ENCODE measurements at regions of chr20 and their contacts with region 1.

Region 1: GRCh38 chr20:54219751-54220426 is 12.0 kb downstream of the PFDN4 start:
- DNase-seq: peak; percentile 63
- ATAC-seq: peak; percentile 57; the same call in 1 of the 2 replicates
- H3K4me3 ChIP-seq: no peak overlapping the region
- H3K27ac ChIP-seq: no peak overlapping the region
- H3K4me1 ChIP-seq: 0 out of 2 replicates have a peak, but pooled peaks cover 3% of the 10 kb centered on the region
- H3K27me3 ChIP-seq: no peaks in the 10 kb centered on the region
- CTCF ChIP-seq: peak; percentile 76
- POLR2A ChIP-seq: no peak
- RAD21 ChIP-seq: peak; percentile 81

Region 2: GRCh38 chr20:54295686-54296085 is 75.8 kb after region 1 on chr20:
- CTCF ChIA-PET with region 1: no interaction called
- POLR2A ChIA-PET with region 1: no interaction called
- dilution Hi-C with region 1: no loop called
- in situ Hi-C with region 1: no loop called
- intact Hi-C with region 1: no loop called
- DNase-seq: no peak
- ATAC-seq: no peak
- H3K4me3 ChIP-seq: no peak overlapping the region
- H3K27ac ChIP-seq: no peak overlapping the region
- H3K4me1 ChIP-seq: no peaks in the 10 kb centered on the region
- H3K27me3 ChIP-seq: no peaks in the 10 kb centered on the region; the same call in 1 of the 2 replicates
- CTCF ChIP-seq: no peak
- POLR2A ChIP-seq: no peak
- RAD21 ChIP-seq: no peak

Region 3: DNA sequence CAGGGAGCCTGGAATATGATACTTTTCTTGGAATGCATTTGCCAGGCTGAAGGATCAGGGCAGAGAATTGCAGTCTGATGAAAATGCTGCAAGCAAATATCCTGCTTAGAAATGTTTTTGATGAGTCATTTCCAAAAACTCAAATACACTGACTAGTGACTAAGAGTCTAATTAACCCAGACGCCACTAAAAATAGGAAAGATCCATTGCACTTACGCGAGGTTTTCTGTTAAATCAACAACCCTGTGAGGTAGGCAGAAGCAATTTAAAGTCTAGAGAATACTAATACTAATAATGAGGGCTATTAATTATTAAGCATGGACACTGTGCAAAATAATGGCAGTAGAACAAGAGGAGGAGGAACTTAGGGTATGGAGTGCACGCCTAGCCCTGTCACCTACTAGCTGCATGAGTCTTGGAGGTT is 125.4 kb after region 1 on chr20:
- CTCF ChIA-PET with region 1: no interaction called
- POLR2A ChIA-PET with region 1: no interaction called
- dilution Hi-C with region 1: no loop called
- in situ Hi-C with region 1: no loop called
- intact Hi-C with region 1: loop called (anchors 10 kb)
- DNase-seq: peak; percentile 87
- ATAC-seq: peak; percentile 83
- H3K4me3 ChIP-seq: no peak overlapping the region
- H3K27ac ChIP-seq: peak overlapping the region; percentile 65; the same call in 1 of the 2 replicates
- H3K4me1 ChIP-seq: peaks cover 11% of the 10 kb centered on the region
- H3K27me3 ChIP-seq: no peaks in the 10 kb centered on the region
- CTCF ChIP-seq: no peak
- POLR2A ChIP-seq: no peak
- RAD21 ChIP-seq: no peak

Region 4: GRCh38 chr20:54475334-54476168 is 255.7 kb after region 1 on chr20 and contains the start of gene DOK5:
- CTCF ChIA-PET with region 1: no interaction called
- POLR2A ChIA-PET with region 1: no interaction called
- dilution Hi-C with region 1: no loop called
- in situ Hi-C with region 1: no loop called
- intact Hi-C with region 1: loop called (anchors 5 kb)
- DNase-seq: peak; percentile 12
- ATAC-seq: peak; percentile 93
- H3K4me3 ChIP-seq: peak within 1 kb of the TSS; percentile 67
- H3K27ac ChIP-seq: no peak within 1 kb of the TSS
- H3K4me1 ChIP-seq: no peaks in the 10 kb centered on the region
- H3K27me3 ChIP-seq: peaks cover 10% of the 10 kb centered on the region
- CTCF ChIP-seq: no peak
- POLR2A ChIP-seq: no peak
- RAD21 ChIP-seq: no peak
- total RNA-seq, gene DOK5: 3.9 and 4.2 TPM in 2 replicates

Measured in IMR-90 (cell line).